AG04450 (cell line): ENCODE measurements at regions of chr9 and their contacts with region 1.

Region 1: GRCh38 chr9:123349691-123350480 is 6.1 kb upstream of the CRB2 start:
- DNase-seq: peak; percentile 13
- H3K4me3 ChIP-seq: no peak overlapping the region
- H3K27ac ChIP-seq: no peak overlapping the region
- H3K27me3 ChIP-seq: peaks cover 36% of the 10 kb centered on the region
- CTCF ChIP-seq: peak; percentile 99

Region 2: GRCh38 chr9:123081824-123082223 is 268.1 kb before region 1 on chr9:
- CTCF ChIA-PET with region 1: interaction called, 112 read pairs
- POLR2A ChIA-PET with region 1: no interaction called
- DNase-seq: no peak
- H3K4me3 ChIP-seq: no peak overlapping the region
- H3K27ac ChIP-seq: no peak overlapping the region
- H3K27me3 ChIP-seq: no peaks in the 10 kb centered on the region
- CTCF ChIP-seq: peak; percentile 70

Region 3: GRCh38 chr9:123102375-123103110 is 247.3 kb before region 1 on chr9:
- CTCF ChIA-PET with region 1: interaction called, 56 read pairs
- POLR2A ChIA-PET with region 1: no interaction called
- DNase-seq: peak; percentile 1
- H3K4me3 ChIP-seq: no peak overlapping the region
- H3K27ac ChIP-seq: no peak overlapping the region
- H3K27me3 ChIP-seq: no peaks in the 10 kb centered on the region
- CTCF ChIP-seq: peak; percentile 51

Region 4: DNA sequence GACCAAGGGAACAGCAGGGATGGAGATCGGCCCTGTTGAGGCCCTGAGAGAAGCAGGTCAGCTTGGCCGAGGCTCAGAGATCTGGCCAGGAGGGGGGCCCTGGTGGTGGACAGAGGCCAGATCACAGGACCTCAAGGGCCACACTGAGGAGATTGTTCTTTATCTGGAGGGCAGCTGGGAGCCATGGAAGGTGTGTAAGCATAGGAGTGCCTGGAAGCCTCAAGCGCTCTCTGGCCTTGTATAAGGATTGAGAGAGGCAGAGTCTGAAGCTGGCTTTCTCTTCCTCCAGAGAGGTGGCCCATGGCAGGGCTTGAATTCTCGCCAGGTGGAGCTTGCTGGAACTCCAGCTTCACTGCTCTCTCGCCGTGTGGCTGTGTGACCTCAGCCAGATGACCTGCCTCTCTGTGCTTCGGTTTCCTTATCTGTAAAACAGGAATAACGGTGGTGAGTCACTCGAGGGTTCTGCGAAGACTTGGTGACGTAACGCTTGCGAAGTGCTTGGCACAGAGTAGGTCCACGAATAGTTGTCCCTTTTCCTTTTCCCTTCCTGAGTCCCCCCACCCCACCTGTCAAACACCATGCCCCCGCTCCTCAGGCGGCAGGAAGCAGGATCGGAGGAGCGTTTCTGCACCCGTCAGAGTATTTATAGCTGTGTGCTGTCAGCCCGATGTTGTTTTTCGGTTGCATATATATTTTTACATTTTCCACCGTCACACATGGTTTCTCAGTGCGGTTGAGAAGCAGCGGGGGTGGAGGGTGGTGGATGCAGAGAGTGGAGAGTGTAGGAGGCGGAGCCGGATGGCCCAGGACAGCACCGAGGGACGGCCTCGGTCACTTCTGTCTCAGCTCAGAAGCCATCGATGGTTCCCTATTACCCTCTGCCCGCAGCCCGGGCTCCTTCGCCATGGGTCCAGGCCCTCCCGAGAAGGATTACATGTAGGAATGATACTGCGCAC is 10.9 kb before region 1 on chr9:
- CTCF ChIA-PET with region 1: interaction called, 13 read pairs
- POLR2A ChIA-PET with region 1: no interaction called
- DNase-seq: no peak
- H3K4me3 ChIP-seq: no peak overlapping the region
- H3K27ac ChIP-seq: no peak overlapping the region
- H3K27me3 ChIP-seq: peaks cover 4% of the 10 kb centered on the region
- CTCF ChIP-seq: no peak

Region 5: GRCh38 chr9:123389070-123389469 is 39.2 kb after region 1 on chr9:
- CTCF ChIA-PET with region 1: interaction called, 158 read pairs
- POLR2A ChIA-PET with region 1: no interaction called
- DNase-seq: no peak
- H3K4me3 ChIP-seq: no peak overlapping the region
- H3K27ac ChIP-seq: no peak overlapping the region
- H3K27me3 ChIP-seq: peaks cover 8% of the 10 kb centered on the region
- CTCF ChIP-seq: no peak